ENCODE measurements at regions of chr10 and their contacts with region 1.

Region 1: GRCh38 chr10:101569838-101570766 is 18.0 kb downstream of the POLL start:
- DNase-seq: peak; percentile 95
- H3K4me3 ChIP-seq: peak overlapping the region; percentile 55 to 66 (median 58)
- H3K27ac ChIP-seq: no peak overlapping the region
- H3K4me1 ChIP-seq: peaks cover 23 to 33% (median 29%) of the 10 kb centered on the region in 4 donors
- H3K27me3 ChIP-seq: peaks cover 6 to 59% (median 35%) of the 10 kb centered on the region in 4 donors
- CTCF ChIP-seq: peak in 2 of 3 experiments; percentile 79 to 99
- EP300 ChIP-seq: no peak
- POLR2A ChIP-seq: no peak

Region 2: GRCh38 chr10:101130984-101131961 is 438.8 kb before region 1 on chr10 and contains the start of gene TLX1:
- intact Hi-C with region 1: no loop called
- DNase-seq: no peak
- H3K4me3 ChIP-seq: peak within 1 kb of the TSS; percentile 43 to 52 (median 46)
- H3K27ac ChIP-seq: no peak within 1 kb of the TSS
- H3K4me1 ChIP-seq: peaks cover 37 to 51% (median 46%) of the 10 kb centered on the region in 4 donors
- H3K27me3 ChIP-seq: peaks cover 6 to 100% (median 73%) of the 10 kb centered on the region in 4 donors
- CTCF ChIP-seq: no peak
- EP300 ChIP-seq: no peak
- POLR2A ChIP-seq: no peak
- total RNA-seq, gene TLX1: not detected

Region 3: DNA sequence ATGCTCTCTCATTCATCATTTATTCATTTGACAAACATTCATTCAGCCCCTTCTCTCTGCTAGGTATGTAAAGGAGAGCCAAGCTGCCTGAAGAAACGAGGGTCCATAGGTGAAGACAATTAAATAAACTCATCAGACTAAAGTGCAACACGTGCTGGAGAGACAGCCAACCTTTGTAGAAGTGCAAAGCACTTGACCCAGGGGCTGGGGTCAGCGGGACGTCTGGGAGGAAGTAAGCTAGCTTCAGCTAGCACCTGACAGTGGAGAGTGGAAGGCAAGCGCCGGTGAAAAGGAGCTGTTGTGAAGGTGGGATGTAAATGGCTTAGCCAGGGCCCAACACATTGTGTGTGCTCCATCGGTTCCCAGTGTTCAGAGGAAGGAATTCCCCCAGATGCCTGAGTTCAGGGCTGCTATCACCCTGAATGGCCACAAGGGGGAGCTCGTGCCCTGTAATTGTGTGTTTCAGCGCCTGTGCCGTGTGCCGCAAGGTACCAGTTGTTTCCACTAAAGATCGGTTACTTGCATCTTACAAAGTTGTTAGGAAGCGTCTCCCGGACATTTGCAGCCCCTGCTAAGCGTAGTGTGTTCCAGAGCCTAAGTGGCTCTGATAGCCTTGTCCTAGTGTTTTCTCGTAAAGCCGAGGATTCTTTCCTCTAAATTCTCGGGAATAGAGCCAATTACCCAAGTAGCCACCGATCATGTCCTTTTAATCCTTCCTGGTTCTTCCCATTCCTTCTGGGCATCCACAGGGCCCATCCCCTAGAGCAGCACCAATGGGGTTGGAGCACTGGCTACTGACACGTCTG is 408.4 kb before region 1 on chr10:
- intact Hi-C with region 1: loop called (anchors 5 kb)
- DNase-seq: peak; percentile 93
- H3K4me3 ChIP-seq: peak overlapping the region; percentile 24 to 57 (median 32)
- H3K27ac ChIP-seq: no peak overlapping the region
- H3K4me1 ChIP-seq: peaks cover 0 to 6% (median 5%) of the 10 kb centered on the region in 4 donors
- H3K27me3 ChIP-seq: peaks cover 0 to 88% (median 9%) of the 10 kb centered on the region in 4 donors
- CTCF ChIP-seq: peak in 2 of 3 experiments; percentile 92 to 95
- EP300 ChIP-seq: no peak
- POLR2A ChIP-seq: no peak